ENCODE measurements at regions of chr17 and their contacts with region 1.

Region 1: DNA sequence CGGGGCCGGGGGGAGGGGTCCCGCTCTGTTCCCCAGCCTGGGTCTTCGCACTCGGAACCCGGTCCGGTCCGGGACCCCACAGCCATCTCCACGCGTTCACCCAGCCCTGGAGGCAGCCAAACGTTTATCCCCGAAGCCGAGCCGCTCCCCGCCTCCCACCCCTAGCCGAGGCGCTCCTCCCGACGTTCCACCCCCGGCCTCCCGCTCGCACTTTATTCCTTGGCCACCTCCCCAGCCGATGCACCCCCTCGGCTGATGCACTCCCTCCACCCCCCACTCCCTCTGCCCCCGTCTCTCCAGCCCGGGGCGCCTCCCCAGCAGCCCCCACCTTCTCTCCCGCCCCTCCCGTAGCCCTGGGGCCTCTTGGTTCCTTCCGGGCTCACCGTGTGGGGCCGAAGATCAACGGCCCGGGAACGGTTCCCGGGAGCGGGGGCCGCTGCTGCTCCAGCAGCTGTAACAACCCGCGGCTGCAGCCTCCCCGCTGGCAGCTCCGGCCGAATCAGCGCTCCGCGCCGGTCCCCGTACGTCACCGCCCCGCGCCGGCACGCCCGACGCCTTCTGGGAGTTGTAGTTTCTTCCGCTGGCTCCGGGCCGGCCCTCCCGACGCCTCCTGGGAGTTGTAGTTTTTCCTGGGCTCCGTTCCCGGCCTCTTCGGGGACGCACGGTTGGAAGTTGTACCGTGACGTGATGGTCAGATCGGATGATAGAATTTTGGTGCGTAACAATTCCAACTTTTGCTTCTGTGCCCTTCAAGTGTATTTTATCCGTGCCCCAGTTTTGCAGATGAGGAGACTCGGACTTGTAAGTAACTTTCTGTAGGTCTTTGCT is at the starts of genes LRRC3C and ORMDL3:
- DNase-seq: peak; percentile 87 to 92 (median 90)
- H3K4me3 ChIP-seq: peak within 1 kb of the TSS; percentile 79 to 89
- H3K4me3 Mint-ChIP-seq: peak within 1 kb of the TSS; percentile 83 to 99 (median 96)
- H3K27ac ChIP-seq: peak within 1 kb of the TSS; percentile 82
- H3K27ac Mint-ChIP-seq: peak within 1 kb of the TSS; percentile 93 to 99 (median 95)
- H3K4me1 ChIP-seq: peaks cover 50% of the 10 kb centered on the region
- H3K4me1 Mint-ChIP-seq: peaks cover 19 to 54% (median 41%) of the 10 kb centered on the region in 4 donors
- H3K27me3 ChIP-seq: no peaks in the 10 kb centered on the region
- H3K27me3 Mint-ChIP-seq: no peaks in the 10 kb centered on the region
- total RNA-seq, gene LRRC3C: not detected
- total RNA-seq, gene ORMDL3: 79.6 to 87.2 TPM

Region 2: GRCh38 chr17:39636927-39637736 is 290.2 kb before region 1 on chr17 and contains the start of gene STARD3:
- CTCF ChIA-PET with region 1: no interaction called
- POLR2A ChIA-PET with region 1: no interaction called
- intact Hi-C with region 1: loop called (anchors 1 kb)
- DNase-seq: peak; percentile 85 to 92 (median 87)
- H3K4me3 ChIP-seq: peak within 1 kb of the TSS; percentile 86 to 88
- H3K4me3 Mint-ChIP-seq: peak within 1 kb of the TSS; percentile 92 to 98 (median 96)
- H3K27ac ChIP-seq: peak within 1 kb of the TSS; percentile 97
- H3K27ac Mint-ChIP-seq: peak within 1 kb of the TSS; percentile 84 to 98 (median 96)
- H3K4me1 ChIP-seq: peaks cover 61% of the 10 kb centered on the region
- H3K4me1 Mint-ChIP-seq: peaks cover 33 to 62% (median 49%) of the 10 kb centered on the region in 4 donors
- H3K27me3 ChIP-seq: no peaks in the 10 kb centered on the region
- H3K27me3 Mint-ChIP-seq: peaks cover 0 to 1% of the 10 kb centered on the region in 2 donors
- total RNA-seq, gene STARD3: 105 to 110 TPM

Region 3: GRCh38 chr17:39916918-39917317 is 10.4 kb before region 1 on chr17:
- CTCF ChIA-PET with region 1: no interaction called
- POLR2A ChIA-PET with region 1: interaction called, 13 read pairs
- intact Hi-C with region 1: no loop called
- DNase-seq: no peak
- H3K4me3 ChIP-seq: no peak overlapping the region
- H3K4me3 Mint-ChIP-seq: no peak overlapping the region
- H3K27ac ChIP-seq: no peak overlapping the region
- H3K27ac Mint-ChIP-seq: peak overlapping the region in 4 of 7 donors; percentile 3 to 39 (median 24)
- H3K4me1 ChIP-seq: peaks cover 40% of the 10 kb centered on the region
- H3K4me1 Mint-ChIP-seq: peaks cover 20 to 49% (median 39%) of the 10 kb centered on the region in 4 donors
- H3K27me3 ChIP-seq: no peaks in the 10 kb centered on the region
- H3K27me3 Mint-ChIP-seq: no peaks in the 10 kb centered on the region

Region 4: DNA sequence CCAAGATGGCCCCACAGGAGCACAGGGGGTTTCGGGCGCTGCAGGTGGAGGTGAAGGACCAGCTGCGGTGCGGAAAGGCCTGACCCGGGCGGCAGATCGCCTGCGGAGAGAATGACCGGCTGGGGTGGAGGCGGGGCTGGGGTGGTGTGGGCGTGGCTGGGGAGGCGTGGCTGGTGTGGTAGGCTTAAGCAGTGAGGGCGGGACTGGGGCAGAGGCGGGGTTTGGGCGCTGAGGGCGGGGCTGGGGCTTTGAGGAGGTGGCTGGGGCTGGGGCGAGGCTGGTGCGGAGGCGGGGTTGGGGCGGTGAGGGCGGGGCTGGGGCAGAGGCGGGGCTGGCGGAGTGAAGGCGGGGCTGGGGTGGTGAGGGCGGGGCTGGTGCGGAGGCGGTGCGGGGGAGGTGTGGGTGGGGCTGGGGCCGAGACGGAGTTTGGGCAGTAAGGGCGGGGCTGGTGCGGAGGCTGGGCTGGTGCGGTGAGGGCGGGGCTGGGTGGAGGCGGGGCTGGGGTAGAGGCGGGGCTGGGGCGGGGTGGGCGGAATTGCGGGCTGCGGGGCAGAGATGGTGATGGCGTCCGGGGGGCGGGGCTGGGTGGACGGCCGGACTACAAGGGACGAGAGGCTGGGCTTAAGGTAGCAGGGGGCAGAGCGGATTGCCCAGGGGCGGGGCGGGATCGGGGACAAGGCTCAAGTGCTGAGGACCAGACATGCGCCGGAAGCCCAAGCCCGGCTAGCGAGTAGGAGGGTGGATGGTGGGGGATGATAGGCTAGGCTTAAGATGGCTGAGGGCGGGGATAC is 25.6 kb after region 1 on chr17:
- CTCF ChIA-PET with region 1: interaction called, 4 read pairs
- POLR2A ChIA-PET with region 1: interaction called, 18 read pairs
- intact Hi-C with region 1: loop called (anchors 1 kb)
- DNase-seq: peak; percentile 90 to 99 (median 90)
- H3K4me3 ChIP-seq: peak overlapping the region; percentile 61 to 78
- H3K4me3 Mint-ChIP-seq: peak overlapping the region; percentile 79 to 90 (median 86)
- H3K27ac ChIP-seq: peak overlapping the region; percentile 34
- H3K27ac Mint-ChIP-seq: peak overlapping the region; percentile 71 to 94 (median 89)
- H3K4me1 ChIP-seq: peaks cover 12% of the 10 kb centered on the region
- H3K4me1 Mint-ChIP-seq: peaks cover 6 to 23% (median 9%) of the 10 kb centered on the region in 4 donors
- H3K27me3 ChIP-seq: no peaks in the 10 kb centered on the region
- H3K27me3 Mint-ChIP-seq: no peaks in the 10 kb centered on the region